Dendritic cell treated with granulocyte-macrophage colony-stimulating factor and Interleukin-4, amounts not matched to agents 40 ng/mL and 50 ng/mL, for 4 days (primary cell): ENCODE measurements at regions of chr10 and their contacts with region 1.

Region 1: DNA sequence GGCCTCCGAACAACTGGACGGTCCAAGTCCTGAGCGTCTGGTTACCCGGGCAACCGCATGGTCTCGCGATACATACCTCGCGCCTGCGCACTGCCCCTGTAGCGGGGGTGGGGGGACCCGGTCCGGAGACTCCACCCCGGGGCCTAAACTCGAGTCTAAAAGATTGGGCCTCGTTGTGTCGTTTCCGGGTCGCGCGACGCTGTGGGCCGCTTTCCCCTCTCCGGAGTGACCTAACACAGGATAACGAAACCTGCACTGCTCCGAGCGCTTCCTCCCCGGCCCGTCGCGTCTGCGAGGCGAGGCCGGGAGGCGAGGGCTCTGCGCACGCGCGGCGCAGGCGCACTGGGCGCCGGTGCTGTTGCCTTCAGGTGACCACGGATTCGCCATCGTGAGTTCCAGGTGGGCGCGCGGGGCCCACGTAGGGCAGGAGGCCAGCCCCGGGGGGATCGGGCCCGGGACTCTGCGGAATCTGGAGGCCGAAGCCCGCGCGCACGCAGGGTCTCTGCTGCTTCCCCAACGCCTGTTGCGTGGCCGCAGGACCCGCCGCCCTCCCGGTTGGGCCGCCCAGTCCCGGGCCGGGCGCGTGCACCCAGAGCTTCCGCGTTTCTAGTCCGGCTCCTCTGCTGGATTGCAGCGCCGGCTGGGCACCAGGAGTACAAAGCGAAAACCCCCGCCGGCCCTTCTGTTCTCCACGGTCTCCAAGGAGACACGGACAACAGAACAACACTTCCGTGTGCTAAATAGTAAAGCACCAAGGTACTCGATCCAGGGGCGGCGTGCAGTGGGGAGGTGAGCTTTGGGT is at the start of gene RPP38:
- H3K4me3 Mint-ChIP-seq: peak within 1 kb of the TSS; percentile 96
- H3K27ac Mint-ChIP-seq: peak within 1 kb of the TSS; percentile 97
- H3K4me1 Mint-ChIP-seq: peaks cover 31% of the 10 kb centered on the region
- H3K27me3 Mint-ChIP-seq: peaks cover 5% of the 10 kb centered on the region

Region 2: DNA sequence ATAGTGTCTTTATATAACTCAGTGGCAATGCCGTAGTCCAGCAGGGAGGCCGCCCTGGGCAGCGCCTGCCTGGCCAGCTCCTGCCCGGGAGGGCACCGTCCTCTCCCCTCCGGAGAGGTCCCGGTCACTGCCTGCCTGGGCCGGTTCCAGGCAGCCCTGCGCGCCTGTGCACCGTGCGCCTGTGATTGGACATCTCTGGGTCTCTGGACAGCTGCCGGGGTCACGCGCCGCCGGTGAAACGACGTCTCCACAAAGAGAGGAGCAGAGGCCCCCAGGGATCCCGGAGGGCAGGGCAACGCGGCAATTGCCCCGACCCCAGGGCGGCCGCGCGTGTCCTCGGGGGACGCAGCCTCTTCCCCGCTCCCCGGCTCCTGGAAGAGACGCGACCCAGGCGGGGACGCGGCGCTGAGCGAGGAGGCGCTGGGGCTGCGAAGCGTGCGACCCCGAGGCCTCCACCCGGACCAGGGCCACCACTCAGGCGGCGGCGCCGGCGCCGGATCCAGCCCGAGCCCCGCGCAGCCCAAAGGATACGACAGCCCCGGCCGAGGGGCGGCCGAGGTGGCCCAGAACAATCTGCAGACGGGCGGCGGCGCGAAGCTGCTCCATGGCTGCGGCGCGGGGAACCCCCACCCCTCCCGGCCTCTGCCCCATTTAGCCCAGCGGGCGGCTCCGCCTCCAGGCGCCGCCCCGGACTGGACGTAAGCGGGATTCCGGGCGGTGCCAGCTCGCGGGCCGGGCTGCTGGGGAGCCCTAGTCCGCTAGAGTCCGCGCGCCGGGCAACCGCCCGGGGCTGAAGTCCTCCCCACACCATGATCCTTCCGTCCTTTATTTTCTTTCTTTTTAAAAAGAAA is 1797.5 kb before region 1 on chr10 and contains the start of gene PHYH:
- intact Hi-C with region 1: loop called (anchors 5 kb)
- H3K4me3 Mint-ChIP-seq: peak within 1 kb of the TSS; percentile 78
- H3K27ac Mint-ChIP-seq: peak within 1 kb of the TSS; percentile 88
- H3K4me1 Mint-ChIP-seq: peaks cover 22% of the 10 kb centered on the region
- H3K27me3 Mint-ChIP-seq: no peaks in the 10 kb centered on the region

Region 3: DNA sequence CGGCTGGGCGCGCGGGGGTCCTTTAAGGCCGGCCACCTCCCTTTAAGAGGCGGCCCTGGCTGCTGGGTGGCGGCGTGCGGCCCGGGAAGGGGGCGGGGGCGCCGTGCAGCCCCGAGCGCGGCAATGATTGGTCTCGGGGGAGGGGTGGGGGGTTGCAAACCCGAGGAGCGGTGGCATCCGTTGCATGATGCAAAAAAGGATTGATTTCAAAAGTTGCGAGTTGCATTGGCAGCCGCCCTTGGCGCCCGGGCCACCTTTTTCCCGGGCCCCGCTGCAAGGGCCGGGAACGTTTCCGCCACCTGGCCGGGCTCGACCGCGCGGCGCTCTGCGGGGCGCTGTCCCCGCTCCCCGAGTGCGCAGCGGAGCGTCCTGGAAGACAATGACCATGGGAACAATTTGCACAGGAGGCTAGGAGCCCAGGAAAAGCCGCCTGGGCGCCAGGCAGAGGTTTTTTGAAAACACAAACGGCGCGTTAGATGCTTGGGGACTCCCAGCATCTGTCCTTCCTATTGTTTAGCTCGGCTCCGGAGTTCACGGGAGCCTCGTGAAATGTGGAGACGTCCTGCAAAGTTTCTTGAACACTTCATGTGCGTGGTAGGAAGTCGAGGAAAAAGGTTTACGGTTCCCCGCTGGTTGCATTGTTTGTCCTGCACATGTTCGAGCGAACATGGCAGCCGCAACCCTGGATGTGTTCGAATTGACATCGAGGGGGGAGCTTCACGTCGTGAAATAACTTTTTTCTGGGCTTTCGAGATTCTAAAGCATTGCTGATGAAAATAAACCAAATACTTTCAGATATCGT is 1748.8 kb before region 1 on chr10 and contains the start of gene SEPHS1:
- intact Hi-C with region 1: loop called (anchors 5 kb)
- H3K4me3 Mint-ChIP-seq: peak within 1 kb of the TSS; percentile 82
- H3K27ac Mint-ChIP-seq: peak within 1 kb of the TSS; percentile 80
- H3K4me1 Mint-ChIP-seq: peaks cover 37% of the 10 kb centered on the region
- H3K27me3 Mint-ChIP-seq: peaks cover 28% of the 10 kb centered on the region

Region 4: GRCh38 chr10:14837757-14838581 is 259.2 kb before region 1 on chr10 and contains the starts of genes CDNF, HSPA14 and MSANTD7:
- intact Hi-C with region 1: loop called (anchors 5 kb)
- H3K4me3 Mint-ChIP-seq: peak within 1 kb of the TSS; percentile 96
- H3K27ac Mint-ChIP-seq: peak within 1 kb of the TSS; percentile 95
- H3K4me1 Mint-ChIP-seq: peaks cover 8% of the 10 kb centered on the region
- H3K27me3 Mint-ChIP-seq: no peaks in the 10 kb centered on the region

Region 5: DNA sequence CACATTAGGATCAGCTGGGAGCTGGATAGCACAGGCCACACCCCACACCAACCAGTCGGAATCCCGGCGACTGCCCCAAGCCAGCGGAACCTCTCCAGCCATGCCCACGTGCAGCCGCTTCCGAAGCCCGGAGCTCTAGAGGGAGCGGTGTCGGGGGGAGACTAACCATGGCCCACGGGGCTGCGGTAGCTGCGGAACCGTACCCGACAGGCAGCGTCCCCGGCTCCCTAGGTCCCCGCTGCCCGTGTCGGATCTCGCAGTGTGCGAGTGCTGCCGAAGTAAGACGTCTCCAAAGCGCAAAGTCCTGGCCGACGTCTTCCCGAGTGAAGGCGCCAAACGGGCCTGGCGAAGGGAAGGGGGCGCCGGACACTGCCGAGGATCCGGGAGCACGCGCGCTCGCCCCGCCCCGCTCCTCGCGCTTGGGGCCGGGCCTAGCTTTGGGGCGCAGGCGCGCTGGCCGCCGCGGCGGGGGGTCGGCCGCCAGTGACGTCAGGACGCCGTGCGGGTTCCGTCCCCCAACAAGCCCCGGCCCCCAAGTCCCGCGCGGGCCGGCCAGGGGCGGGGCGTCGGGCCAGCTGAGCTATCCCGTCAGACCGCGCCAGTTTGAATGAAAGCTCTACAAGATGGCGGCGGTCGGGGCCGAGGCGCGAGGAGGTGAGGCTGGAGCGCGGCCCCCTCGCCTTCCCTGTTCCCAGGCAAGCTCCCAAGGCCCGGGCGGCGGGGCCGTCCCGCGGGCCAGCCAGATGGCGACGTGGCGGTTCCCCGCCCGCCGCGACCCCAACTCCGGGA is 218.8 kb before region 1 on chr10 and contains the start of gene SUV39H2:
- intact Hi-C with region 1: loop called (anchors 2 kb)
- H3K4me3 Mint-ChIP-seq: peak within 1 kb of the TSS; percentile 97
- H3K27ac Mint-ChIP-seq: peak within 1 kb of the TSS; percentile 94
- H3K4me1 Mint-ChIP-seq: peaks cover 41% of the 10 kb centered on the region
- H3K27me3 Mint-ChIP-seq: no peaks in the 10 kb centered on the region

Region 6: DNA sequence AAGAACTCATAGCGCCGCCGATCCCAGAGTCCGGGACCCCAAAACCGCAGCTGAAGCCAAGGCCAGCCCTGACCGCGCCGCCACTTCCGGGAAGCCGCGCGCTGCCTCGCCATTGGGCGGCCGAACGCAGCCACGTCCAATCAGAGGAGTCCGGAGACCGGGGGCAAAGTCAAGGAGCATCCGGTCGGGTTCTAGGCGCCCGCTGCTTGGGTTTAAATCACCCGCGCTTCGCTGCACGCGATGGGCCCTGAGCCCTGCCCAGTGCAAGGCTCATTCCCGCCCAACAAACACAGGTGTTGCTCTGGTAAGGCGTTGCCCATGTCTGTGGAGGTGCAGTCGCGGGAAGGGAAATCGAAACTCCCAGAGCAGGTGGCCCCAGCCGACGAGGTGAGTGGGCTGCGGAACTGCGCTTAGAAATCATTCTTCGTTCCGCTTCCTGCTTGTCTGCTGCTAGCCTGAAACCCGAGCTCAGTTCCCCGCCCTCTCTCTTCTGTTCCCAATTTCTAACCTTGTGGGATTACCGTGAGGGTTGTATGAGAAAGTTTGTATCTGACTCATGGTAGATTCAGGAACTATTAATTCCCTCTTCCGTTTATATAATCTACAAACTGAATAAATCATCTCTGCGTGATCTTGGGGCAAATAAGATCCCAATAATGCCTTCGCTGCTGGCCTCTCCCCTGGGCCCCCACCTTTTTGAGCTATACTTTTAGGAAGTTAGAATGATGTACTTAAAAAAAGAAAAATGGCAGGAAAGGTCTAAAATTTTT is 143.0 kb before region 1 on chr10 and contains the start of gene DCLRE1C:
- intact Hi-C with region 1: loop called (anchors 1 kb)
- H3K4me3 Mint-ChIP-seq: peak within 1 kb of the TSS; percentile 89
- H3K27ac Mint-ChIP-seq: peak within 1 kb of the TSS; percentile 99
- H3K4me1 Mint-ChIP-seq: peaks cover 60% of the 10 kb centered on the region
- H3K27me3 Mint-ChIP-seq: no peaks in the 10 kb centered on the region

Region 7: DNA sequence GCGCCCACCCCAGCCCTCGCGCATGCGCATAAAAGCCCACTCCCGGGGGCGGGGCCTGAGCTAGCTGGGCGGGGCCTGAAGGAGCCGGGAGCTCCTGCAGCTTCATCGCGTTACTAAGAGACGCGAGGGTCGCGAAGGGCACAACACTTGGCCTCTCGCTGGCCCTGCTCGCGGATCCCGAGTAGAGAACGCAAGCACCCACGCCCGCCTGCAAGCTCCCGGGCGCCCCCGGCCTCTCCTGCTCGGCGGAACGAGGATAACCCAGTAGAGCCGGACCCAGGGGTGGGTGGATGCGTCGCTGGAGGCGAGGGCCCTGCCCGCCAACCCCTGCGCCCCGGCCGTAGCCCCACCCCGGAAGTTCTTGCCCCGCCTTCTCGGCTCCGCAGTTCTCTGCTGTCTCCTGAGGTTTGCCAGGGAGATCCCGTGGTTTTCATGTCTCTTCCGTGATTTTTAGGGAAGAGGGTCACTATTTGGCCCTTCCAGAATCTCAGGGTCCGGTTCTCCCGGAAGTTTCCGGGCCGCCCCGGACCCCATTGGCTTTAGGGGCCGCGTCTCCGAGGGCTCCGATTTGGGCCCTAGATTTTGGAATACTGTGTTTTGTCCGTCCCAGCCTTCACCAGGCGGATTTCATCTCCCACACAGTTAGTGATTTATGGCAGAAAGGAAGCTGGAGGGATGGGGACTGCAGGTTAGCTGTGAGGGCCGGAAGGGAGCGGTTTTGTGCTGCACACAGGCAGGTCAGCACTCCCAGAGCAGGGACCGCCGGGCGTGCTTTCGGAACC is 137.7 kb before region 1 on chr10 and contains the start of gene MEIG1:
- intact Hi-C with region 1: loop called (anchors 1 kb)
- H3K4me3 Mint-ChIP-seq: peak within 1 kb of the TSS; percentile 89
- H3K27ac Mint-ChIP-seq: peak within 1 kb of the TSS; percentile 99
- H3K4me1 Mint-ChIP-seq: peaks cover 20% of the 10 kb centered on the region
- H3K27me3 Mint-ChIP-seq: no peaks in the 10 kb centered on the region